MCF 10A (cell line): ENCODE measurements at regions of chr6 and their contacts with region 1.

Region 1: GRCh38 chr6:41625442-41625841 is 12.8 kb upstream of the MDFI start:
- DNase-seq: peak; percentile 93
- H3K4me3 Mint-ChIP-seq: peak overlapping the region; percentile 29
- H3K27ac Mint-ChIP-seq: peak overlapping the region; percentile 57
- H3K4me1 Mint-ChIP-seq: peaks cover 53% of the 10 kb centered on the region
- H3K27me3 Mint-ChIP-seq: no peaks in the 10 kb centered on the region
- CTCF ChIP-seq: no peak

Region 2: GRCh38 chr6:41602864-41603608 is 22.4 kb before region 1 on chr6:
- CTCF ChIA-PET with region 1: interaction called, 13 read pairs
- POLR2A ChIA-PET with region 1: no interaction called
- intact Hi-C with region 1: no loop called
- DNase-seq: peak; percentile 87
- H3K4me3 Mint-ChIP-seq: no peak overlapping the region
- H3K27ac Mint-ChIP-seq: no peak overlapping the region
- H3K4me1 Mint-ChIP-seq: peaks cover 5% of the 10 kb centered on the region
- H3K27me3 Mint-ChIP-seq: no peaks in the 10 kb centered on the region
- CTCF ChIP-seq: peak; percentile 90

Region 3: DNA sequence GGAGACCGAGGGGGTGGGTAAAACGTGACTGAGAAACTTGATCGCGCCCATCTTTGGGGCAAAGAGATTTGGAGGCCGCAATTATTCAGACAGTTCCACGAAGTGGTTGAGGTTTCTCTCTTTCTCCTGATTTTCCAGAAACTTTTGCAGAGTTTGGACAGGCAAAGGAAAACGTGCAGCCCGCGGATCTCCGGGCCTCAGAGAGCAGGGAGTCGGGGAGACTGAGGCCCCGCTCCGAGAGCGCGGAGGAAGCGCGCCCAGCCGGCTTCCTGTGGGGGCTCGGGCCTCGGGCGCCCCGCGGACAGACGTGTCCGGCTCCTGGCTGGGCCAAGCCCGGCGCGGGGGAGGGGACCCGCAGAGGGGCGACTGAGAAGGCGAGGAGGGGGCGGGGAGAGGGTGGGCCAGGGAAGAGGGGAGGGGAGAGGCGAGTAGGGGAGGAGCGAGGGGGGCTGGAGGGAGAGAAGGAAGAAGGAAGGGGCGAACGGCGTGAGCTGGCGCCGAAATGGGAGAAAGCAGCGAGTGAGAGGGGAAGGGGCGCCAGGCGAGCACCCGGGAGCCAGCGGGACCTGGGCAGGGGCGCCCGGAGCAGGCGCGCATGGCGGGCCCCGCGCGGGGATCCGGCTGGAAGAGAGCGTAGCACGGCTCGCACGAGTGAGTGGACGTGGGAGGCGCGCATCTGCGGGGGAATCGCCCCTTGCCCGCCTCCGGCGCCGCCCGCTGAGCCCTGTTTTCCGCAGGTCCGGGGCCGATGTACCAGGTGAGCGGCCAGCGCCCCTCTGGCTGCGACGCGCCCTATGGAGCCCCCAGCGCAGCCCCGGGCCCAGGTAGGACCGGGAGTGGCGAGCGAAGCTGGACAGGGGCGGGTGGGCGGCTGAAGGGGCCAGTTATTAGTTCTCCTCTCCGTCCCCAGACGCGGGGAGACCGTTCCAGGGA is 12.8 kb after region 1 on chr6 and contains the start of gene MDFI:
- CTCF ChIA-PET with region 1: interaction called, 14 read pairs
- POLR2A ChIA-PET with region 1: interaction called, 42 read pairs
- intact Hi-C with region 1: no loop called
- DNase-seq: no peak
- H3K4me3 Mint-ChIP-seq: peak within 1 kb of the TSS; percentile 86
- H3K27ac Mint-ChIP-seq: peak within 1 kb of the TSS; percentile 83
- H3K4me1 Mint-ChIP-seq: peaks cover 11% of the 10 kb centered on the region
- H3K27me3 Mint-ChIP-seq: no peaks in the 10 kb centered on the region
- CTCF ChIP-seq: no peak
- total RNA-seq, gene MDFI: 39.1 and 59.1 TPM in 2 replicates

Region 4: GRCh38 chr6:41644297-41644879 is 18.9 kb after region 1 on chr6:
- CTCF ChIA-PET with region 1: interaction called, 6 read pairs
- POLR2A ChIA-PET with region 1: interaction called, 10 read pairs
- intact Hi-C with region 1: no loop called
- DNase-seq: peak; percentile 49
- H3K4me3 Mint-ChIP-seq: peak overlapping the region; percentile 13
- H3K27ac Mint-ChIP-seq: peak overlapping the region; percentile 91
- H3K4me1 Mint-ChIP-seq: peaks cover 26% of the 10 kb centered on the region
- H3K27me3 Mint-ChIP-seq: no peaks in the 10 kb centered on the region
- CTCF ChIP-seq: no peak